ENCODE measurements at regions of chrX and their contacts with region 1.

Region 1: GRCh38 chrX:57918750-57919436 is 8.6 kb upstream of the ZXDA start:
- DNase-seq: peak; percentile 8 to 23
- ATAC-seq: peak; percentile 38 to 66 (median 48)
- H3K4me3 ChIP-seq: peak overlapping the region in 4 of 10 donors; percentile 10 to 28 (median 27)
- H3K27ac ChIP-seq: no peak overlapping the region
- H3K4me1 ChIP-seq: no peaks in the 10 kb centered on the region
- H3K27me3 ChIP-seq: no peaks in the 10 kb centered on the region
- CTCF ChIP-seq: peak; percentile 19 to 67 (median 57)

Region 2: DNA sequence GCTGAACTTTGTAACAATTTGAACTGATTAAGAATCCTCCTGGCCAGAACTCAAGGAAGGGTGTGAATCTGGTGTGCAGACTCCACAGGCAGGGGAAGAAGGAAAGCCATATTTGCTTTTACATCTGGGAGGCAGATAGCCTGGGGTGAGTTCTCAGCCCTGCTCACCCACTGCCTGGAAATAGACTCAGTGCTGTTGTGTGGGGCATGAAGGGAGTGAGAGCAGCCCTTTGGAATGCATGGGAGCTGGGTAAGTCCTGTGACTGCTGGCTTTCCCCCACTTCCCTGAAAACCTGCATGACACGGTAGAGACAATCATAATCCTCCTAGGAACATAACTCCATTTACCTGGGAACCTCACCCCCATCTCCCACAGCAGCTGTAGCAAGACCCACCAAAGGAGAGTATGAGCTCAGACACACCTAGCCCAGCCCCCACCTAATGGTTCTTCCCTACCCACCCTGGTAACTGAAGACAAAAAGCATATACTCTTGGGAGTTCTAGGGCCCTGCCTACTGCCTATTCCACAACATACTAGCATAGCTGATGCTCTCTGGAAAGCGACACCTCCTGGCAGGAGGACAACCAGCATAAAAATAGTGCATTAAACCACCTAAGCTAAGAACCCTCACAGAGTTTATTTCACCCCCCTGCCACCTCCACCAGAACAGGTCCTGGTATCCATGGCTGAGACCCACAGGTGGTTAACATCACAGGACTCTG is 1414.8 kb before region 1 on chrX:
- intact Hi-C with region 1: no loop called
- DNase-seq: no peak
- ATAC-seq: no peak
- H3K4me3 ChIP-seq: no peak overlapping the region
- H3K27ac ChIP-seq: no peak overlapping the region
- H3K4me1 ChIP-seq: no peaks in the 10 kb centered on the region
- H3K27me3 ChIP-seq: peaks cover 0 to 8% (median 0%) of the 10 kb centered on the region in 7 donors
- CTCF ChIP-seq: no peak

Region 3: GRCh38 chrX:57587607-57588006 is 331.3 kb before region 1 on chrX:
- intact Hi-C with region 1: loop called in 3 of 10 experiments (anchors 10 kb)
- DNase-seq: no peak
- ATAC-seq: no peak
- H3K4me3 ChIP-seq: no peak overlapping the region
- H3K27ac ChIP-seq: no peak overlapping the region
- H3K4me1 ChIP-seq: peaks cover 0 to 6% (median 5%) of the 10 kb centered on the region in 9 donors
- H3K27me3 ChIP-seq: peaks cover 0 to 11% (median 0%) of the 10 kb centered on the region in 7 donors
- CTCF ChIP-seq: no peak

Region 4: DNA sequence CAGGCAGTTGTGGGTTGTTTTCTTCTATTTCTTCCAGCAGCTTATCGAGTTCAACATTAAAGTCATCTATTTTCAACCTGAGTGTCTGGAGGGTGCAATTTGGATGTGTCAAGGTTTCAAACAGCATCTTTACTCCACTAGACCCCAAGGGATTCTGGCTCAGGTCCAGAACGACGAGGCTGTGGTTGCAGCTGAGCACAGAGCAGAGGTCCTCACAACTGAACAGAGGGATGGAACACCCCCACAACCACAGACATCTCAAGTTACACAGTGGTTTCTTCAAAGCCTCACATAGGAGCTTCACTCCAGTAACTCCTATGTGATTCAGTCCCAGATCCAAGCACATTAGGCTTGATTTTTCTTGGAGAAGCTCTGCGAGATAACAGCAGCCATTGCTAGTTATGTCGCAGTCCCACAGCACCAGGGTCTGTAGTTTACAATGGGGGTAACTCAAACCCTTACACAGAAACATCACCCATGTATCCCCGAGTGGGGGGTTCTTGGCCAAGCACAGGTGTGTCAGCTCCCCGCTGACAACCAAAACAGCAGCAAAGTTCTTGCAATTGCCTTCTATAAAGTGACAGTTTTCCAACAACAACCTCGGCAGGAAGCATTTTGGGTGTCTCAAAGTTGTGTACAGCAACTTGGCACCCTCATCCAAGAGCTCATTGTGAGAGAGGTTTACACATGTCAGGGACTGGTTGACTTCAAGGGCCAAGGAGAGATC is 241.6 kb before region 1 on chrX:
- intact Hi-C with region 1: no loop called
- DNase-seq: no peak
- ATAC-seq: no peak
- H3K4me3 ChIP-seq: no peak overlapping the region
- H3K27ac ChIP-seq: no peak overlapping the region
- H3K4me1 ChIP-seq: no peaks in the 10 kb centered on the region
- H3K27me3 ChIP-seq: peaks cover 0 to 7% (median 0%) of the 10 kb centered on the region in 7 donors
- CTCF ChIP-seq: no peak